ENCODE measurements at regions of chr16 and their contacts with region 1.

Region 1: DNA sequence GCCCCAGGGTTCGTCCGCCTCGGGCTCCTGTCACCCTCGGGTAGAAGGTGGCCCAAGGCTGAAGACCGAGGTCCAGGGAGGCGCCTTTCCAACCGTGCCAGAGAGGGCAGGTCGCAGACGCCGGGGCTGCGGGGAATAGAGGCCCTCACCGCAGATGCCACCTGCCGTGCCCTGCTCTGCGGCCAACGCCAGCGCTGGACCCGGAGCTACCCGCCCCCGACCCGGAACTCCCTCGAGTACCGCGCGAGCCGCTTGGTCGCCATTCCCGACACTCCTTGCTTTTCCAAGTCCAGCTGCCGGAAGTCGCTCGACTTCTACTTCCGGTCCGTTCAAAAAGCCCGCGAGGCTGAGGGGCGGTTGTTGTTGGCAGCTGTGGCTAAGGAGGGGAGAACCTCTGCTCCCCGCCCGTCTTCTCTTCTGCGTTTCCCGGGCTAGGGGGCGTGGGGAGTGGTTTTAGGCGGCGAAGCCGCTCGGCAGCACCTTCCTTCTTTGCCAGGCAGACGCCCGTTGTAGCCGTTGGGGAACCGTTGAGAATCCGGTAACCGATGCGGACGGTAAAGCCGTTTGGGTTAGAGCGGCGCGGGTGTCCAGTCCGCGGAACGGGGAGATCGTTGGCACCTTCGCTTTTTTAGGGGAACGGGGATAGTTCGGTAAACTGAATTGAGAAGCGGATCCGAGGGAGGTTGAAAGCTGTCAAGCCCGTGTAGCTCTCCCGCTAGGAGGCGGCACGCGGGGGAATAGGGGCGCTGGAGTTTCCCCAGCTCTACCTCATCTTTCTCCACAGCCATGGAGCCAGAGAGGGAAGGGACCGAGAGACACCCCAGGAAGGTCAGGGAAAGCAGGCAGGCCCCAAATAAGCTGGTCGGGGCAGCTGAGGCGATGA is at the starts of genes ERI2 and REXO5:
- DNase-seq: peak; percentile 91

Region 2: DNA sequence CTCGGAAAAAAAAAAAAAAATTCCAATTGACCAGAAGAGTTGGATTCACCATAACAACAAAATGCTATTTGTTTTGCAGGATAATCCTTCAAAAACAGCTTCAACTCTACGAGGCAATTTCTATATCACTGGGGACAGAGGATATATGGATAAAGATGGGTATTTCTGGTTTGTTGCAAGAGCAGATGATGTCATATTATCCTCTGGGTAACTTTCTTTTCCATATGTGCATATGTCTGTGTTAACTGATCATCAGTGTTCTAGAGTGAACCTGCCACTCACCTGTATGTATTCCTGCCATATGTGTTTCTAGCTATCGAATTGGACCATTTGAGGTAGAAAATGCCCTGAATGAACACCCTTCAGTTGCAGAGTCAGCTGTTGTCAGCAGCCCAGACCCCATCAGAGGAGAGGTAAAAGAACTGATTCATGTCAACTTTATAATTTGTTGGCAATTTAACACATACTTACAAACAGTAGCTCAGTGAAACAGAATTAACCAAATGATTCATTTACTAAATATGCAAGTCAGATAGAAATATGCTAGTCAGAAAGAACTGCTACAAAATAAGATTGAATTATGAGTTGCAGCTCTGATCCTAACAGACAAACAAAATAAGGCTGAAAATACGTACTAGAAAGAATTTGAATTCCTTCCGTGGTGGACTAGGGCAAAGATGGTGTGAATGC is 14.3 kb before region 1 on chr16:
- CTCF ChIA-PET with region 1: no interaction called
- POLR2A ChIA-PET with region 1: interaction called, 14 read pairs
- DNase-seq: no peak

Region 3: DNA sequence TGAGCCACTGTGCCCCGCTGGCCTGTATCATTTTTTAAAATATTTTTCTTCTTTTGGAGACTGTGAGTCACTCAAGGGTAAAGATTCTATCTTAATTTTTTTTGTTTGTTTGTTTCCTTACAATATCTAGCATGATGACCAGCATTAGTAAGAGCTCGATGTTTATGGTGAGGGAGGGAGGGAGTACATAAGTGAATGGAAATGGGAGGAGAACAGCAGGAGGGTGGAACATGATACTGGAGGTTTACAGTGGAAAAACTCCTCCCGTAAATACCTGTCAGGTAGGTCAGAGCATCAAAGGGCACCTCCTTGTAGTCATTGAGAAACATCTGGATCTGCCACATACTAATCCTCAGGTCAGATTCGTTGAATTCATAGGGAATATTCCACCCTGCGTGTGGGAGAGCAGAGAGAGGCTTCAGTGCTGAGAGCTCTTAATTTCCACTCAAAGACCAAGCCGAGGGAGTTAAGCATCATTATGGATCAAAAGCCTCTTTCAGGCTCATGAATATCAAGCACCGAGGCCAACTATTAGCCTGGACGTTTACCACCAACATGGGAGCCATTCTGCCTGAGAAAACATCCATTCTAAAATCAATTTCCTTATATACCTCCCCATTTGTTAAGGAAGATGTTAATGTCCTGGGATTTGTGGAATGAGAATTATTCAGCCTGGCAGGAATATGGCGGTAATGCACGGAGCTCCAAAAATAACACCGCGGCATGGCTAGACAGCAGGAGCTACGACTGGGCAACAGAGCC is 145.9 kb after region 1 on chr16:
- CTCF ChIA-PET with region 1: no interaction called
- POLR2A ChIA-PET with region 1: no interaction called
- DNase-seq: no peak